ENCODE measurements at regions of chr1 and their contacts with region 1.

Region 1: GRCh38 chr1:211698161-211699026 is 23.0 kb upstream of the NEK2 start:
- DNase-seq: peak; percentile 7
- H3K4me3 ChIP-seq: peak overlapping the region; percentile 29; the same call in 1 of the 2 replicates
- H3K27ac ChIP-seq: no peak overlapping the region
- H3K27me3 ChIP-seq: peaks cover 27% of the 10 kb centered on the region
- CTCF ChIP-seq: peak; percentile 95

Region 2: GRCh38 chr1:211680752-211681327 is 17.6 kb before region 1 on chr1:
- CTCF ChIA-PET with region 1: interaction called, 98 read pairs
- POLR2A ChIA-PET with region 1: no interaction called
- DNase-seq: peak; percentile 79
- H3K4me3 ChIP-seq: no peak overlapping the region
- H3K27ac ChIP-seq: no peak overlapping the region
- H3K27me3 ChIP-seq: peaks cover 6% of the 10 kb centered on the region
- CTCF ChIP-seq: peak; percentile 78

Region 3: DNA sequence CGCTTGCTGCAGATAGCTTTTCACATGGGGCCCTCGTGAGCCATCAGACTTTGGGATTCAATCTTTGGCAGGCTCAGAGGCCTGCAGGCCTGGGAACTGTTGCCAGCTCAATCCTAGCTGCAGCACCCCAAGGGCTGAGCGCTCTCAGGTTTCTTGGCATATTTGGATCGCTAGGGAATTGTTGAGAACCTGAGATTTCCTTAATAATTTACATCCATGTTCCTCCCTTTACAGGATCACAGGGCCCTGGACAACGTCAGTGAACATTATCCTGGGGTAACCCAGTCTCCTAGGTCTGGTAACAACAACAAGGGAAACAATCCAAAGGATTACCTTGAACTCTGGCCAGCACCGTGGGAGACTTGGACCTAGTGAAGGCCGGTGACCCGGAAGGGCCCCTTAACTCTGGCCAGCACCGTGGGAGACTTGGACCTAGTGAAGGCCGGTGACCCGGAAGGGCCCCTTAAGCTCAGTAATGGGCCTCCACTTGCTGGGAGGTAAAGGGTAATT is 26.3 kb after region 1 on chr1:
- CTCF ChIA-PET with region 1: interaction called, 16 read pairs
- POLR2A ChIA-PET with region 1: no interaction called
- DNase-seq: no peak
- H3K4me3 ChIP-seq: no peak overlapping the region
- H3K27ac ChIP-seq: no peak overlapping the region
- H3K27me3 ChIP-seq: peaks cover 6% of the 10 kb centered on the region
- CTCF ChIP-seq: no peak

Region 4: GRCh38 chr1:211830330-211831142 is 132.1 kb after region 1 on chr1 and contains the start of gene LPGAT1:
- CTCF ChIA-PET with region 1: interaction called, 29 read pairs
- POLR2A ChIA-PET with region 1: no interaction called
- DNase-seq: no peak
- H3K4me3 ChIP-seq: peak within 1 kb of the TSS; percentile 69
- H3K27ac ChIP-seq: no peak within 1 kb of the TSS
- H3K27me3 ChIP-seq: peaks cover 3% of the 10 kb centered on the region
- CTCF ChIP-seq: peak; percentile 50
- polyA plus RNA-seq, gene LPGAT1: 14.2 and 16.5 TPM in 2 replicates

Region 5: GRCh38 chr1:211865180-211865579 is 166.8 kb after region 1 on chr1:
- CTCF ChIA-PET with region 1: no interaction called
- POLR2A ChIA-PET with region 1: no interaction called
- DNase-seq: no peak
- H3K4me3 ChIP-seq: no peak overlapping the region
- H3K27ac ChIP-seq: no peak overlapping the region
- H3K27me3 ChIP-seq: peaks cover 3% of the 10 kb centered on the region
- CTCF ChIP-seq: no peak

Region 6: DNA sequence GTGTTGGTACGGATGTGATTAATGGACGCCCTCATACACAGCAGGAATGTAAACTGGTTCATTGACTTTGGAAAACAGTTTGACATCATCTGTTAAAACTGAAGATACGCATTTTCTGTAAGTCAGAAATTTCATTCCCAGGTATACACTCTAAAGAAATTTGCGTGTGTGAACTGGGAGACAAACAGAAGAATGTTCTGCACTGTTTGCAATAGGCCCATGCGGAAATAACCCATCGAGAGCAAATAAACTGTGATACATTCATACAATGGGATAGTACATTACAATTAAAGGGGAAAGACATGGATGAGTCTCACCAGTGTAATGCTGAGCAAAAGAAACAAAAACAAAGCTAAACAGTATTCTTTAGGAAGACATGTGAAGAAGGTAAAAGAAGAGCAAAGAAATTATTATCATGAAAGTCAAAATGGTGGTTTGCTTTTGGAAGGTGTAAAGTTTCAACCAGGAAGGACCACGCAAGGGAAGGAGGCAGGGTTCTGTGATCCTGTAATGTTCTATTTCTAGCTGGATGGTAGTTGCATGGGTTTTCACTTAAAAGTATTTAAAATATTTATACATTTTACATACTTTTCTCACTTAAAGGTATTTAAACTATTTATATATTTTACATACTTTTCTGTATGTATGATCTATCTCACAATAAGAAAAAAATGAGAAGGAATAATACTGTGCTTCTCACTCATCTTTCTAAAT is 306.7 kb after region 1 on chr1:
- CTCF ChIA-PET with region 1: interaction called, 11 read pairs
- POLR2A ChIA-PET with region 1: no interaction called
- DNase-seq: no peak
- H3K4me3 ChIP-seq: no peak overlapping the region
- H3K27ac ChIP-seq: no peak overlapping the region
- H3K27me3 ChIP-seq: no peaks in the 10 kb centered on the region
- CTCF ChIP-seq: no peak